Naive thymus-derived CD4-positive, alpha-beta T cell (primary cell): ENCODE measurements at regions of chr6 and their contacts with region 1.

Region 1: DNA sequence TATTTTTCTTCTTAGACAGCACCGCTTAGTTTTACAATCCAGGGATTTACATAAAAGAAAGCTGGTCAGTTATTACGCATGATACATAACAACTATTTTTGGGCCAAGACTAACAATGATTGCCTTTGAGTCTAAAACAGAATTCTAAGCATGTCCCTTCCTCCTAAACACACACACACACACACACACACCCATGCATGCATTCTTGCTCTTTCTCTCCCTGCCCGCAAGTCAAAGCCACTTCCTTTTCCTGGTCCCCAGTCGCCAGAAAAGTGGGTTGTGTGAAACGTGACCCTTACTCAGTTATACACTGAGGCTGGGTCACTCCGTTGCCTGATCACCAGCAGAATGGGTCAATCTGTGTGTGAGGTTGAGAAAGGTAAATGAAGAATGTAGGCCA is 31.4 kb downstream of the FYN start:
- DNase-seq: peak in 7 of 9 donors; percentile 38 to 63 (median 61)
- ATAC-seq: no peak
- H3K4me3 ChIP-seq: no peak overlapping the region
- H3K4me3 Mint-ChIP-seq: no peak overlapping the region
- H3K27ac ChIP-seq: peak overlapping the region; percentile 62
- H3K27ac Mint-ChIP-seq: no peak overlapping the region
- H3K4me1 ChIP-seq: peaks cover 98 to 100% of the 10 kb centered on the region in 2 donors
- H3K4me1 Mint-ChIP-seq: peaks cover 0 to 55% (median 0%) of the 10 kb centered on the region in 7 donors
- H3K27me3 ChIP-seq: no peaks in the 10 kb centered on the region
- H3K27me3 Mint-ChIP-seq: no peaks in the 10 kb centered on the region

Region 2: DNA sequence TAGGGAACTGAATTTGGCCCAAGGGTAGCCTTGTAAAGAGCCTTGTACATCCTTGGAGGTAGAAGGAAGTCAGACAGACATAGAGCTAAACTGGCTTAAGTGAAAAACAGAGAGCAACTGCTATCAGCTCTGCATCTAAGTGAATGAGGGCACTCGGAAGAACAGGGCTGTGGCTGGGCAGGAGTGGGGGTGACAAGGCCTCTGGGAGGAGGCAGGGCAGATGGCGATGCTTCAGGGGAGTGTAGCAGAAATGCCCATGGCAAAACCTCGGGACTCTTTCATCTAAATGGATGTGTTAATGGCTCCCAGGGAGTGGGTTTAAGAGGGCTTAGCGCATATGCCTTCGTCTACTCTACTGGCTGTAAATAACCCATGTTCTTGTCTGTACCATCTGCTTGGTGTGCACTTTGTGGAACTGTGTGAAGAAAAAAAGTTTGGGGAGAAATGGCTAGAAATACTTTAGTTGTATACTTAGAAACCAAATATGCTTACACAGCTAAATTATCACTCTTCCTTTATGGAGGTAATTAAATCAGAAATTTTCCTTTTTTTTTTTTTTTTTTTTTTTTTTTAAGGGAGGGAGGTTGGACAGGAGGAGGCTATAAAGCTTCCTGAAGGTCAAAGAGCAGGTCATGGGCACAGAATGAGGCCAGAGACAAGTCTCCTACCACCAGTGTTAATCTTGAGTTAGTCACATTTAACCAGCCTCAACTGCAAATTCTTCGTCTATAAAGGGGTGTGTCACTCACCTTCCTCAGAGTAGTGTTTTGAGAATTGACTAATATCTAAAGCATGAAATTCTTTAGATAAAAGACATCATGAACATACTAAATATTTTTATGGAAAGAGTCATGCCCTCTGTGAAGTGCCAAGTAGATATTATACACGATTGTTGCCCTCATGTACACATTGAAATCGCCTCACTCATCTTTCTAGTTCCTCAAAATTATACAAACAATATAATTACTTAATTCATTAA is 29.5 kb before region 1 on chr6:
- CTCF ChIA-PET with region 1: no interaction called
- POLR2A ChIA-PET with region 1: interaction called, 3 read pairs
- intact Hi-C with region 1: loop called in 1 of 2 experiments (anchors 1 kb)
- DNase-seq: peak in 2 of 9 donors; percentile 21 to 23
- ATAC-seq: peak; percentile 38
- H3K4me3 ChIP-seq: no peak overlapping the region
- H3K4me3 Mint-ChIP-seq: peak overlapping the region; percentile 8 to 81 (median 70)
- H3K27ac ChIP-seq: peak overlapping the region; percentile 66
- H3K27ac Mint-ChIP-seq: peak overlapping the region; percentile 83 to 97 (median 88)
- H3K4me1 ChIP-seq: peaks cover 72% of the 10 kb centered on the region in 2 donors
- H3K4me1 Mint-ChIP-seq: peaks cover 47 to 91% (median 86%) of the 10 kb centered on the region in 7 donors
- H3K27me3 ChIP-seq: no peaks in the 10 kb centered on the region
- H3K27me3 Mint-ChIP-seq: no peaks in the 10 kb centered on the region

Region 3: DNA sequence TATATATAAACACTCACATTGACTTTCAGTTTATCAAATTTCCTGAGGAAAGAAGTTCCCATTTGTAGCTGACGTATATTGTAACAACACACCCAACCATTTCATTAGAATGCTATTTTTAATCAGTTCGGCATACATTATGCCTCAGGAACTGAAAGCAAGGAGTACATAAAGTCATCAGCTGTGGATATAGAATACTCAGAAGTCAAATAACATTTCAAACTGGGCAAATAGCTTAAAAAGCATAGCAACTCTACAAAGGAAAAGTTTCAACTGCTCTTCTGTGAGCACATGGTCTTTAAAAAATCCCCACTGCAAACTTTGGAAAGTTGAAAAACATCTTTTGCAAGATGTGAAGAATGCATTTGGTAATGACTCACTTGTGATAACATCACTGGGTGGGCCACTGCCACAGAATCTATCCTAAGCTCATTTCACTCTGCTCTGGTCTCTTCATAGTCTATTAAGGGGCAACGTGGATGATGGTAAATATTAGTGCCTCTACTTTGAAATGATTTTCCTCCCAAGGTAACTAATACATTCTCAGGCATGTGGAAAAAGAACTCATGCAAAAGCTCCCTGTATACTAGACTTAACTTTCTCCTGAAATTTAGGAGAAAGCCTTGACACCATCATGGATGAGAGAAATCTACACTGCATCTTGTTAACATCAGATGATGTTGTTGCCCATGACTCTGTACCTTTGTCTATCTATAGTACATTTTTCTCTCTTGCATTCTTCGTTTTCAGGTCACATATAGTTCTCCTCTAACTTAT is 17.8 kb before region 1 on chr6:
- CTCF ChIA-PET with region 1: interaction called, 4 read pairs
- POLR2A ChIA-PET with region 1: interaction called, 6 read pairs
- intact Hi-C with region 1: loop called (anchors 2 kb)
- DNase-seq: peak in 1 of 9 donors; percentile 61
- ATAC-seq: peak; percentile 75
- H3K4me3 ChIP-seq: no peak overlapping the region
- H3K4me3 Mint-ChIP-seq: peak overlapping the region in 9 of 10 donors; percentile 2 to 64 (median 43)
- H3K27ac ChIP-seq: peak overlapping the region; percentile 56
- H3K27ac Mint-ChIP-seq: peak overlapping the region; percentile 5 to 92 (median 78)
- H3K4me1 ChIP-seq: peaks cover 39 to 56% of the 10 kb centered on the region in 2 donors
- H3K4me1 Mint-ChIP-seq: peaks cover 51 to 91% (median 86%) of the 10 kb centered on the region in 7 donors
- H3K27me3 ChIP-seq: no peaks in the 10 kb centered on the region
- H3K27me3 Mint-ChIP-seq: no peaks in the 10 kb centered on the region

Region 4: DNA sequence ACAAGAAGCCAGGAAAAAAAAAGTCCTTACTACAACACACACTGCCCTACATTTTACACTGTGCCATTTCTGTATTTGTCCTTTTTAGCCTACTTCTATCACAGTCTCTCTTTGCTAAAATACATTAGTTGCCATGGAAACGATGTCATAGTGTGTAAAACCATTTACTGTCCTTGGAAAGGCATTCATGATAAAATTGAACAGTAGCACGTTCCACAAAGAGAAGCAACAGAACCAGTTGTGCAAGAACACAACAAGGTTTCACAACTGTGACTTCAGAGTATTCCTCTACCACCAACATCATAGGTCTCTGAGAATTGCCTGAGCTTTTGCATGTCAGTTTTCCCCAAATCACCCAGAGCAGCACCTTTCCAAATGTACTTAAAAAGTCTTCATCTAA is 10.9 kb after region 1 on chr6:
- CTCF ChIA-PET with region 1: no interaction called
- POLR2A ChIA-PET with region 1: interaction called, 6 read pairs
- intact Hi-C with region 1: loop called in 1 of 2 experiments (anchors 1 kb)
- DNase-seq: peak in 4 of 9 donors; percentile 30 to 45 (median 42)
- ATAC-seq: peak; percentile 29
- H3K4me3 ChIP-seq: no peak overlapping the region
- H3K4me3 Mint-ChIP-seq: peak overlapping the region in 7 of 10 donors; percentile 10 to 71 (median 51)
- H3K27ac ChIP-seq: peak overlapping the region; percentile 41
- H3K27ac Mint-ChIP-seq: peak overlapping the region in 7 of 9 donors; percentile 57 to 88 (median 82)
- H3K4me1 ChIP-seq: peaks cover 57 to 87% of the 10 kb centered on the region in 2 donors
- H3K4me1 Mint-ChIP-seq: peaks cover 0 to 89% (median 77%) of the 10 kb centered on the region in 7 donors
- H3K27me3 ChIP-seq: no peaks in the 10 kb centered on the region
- H3K27me3 Mint-ChIP-seq: no peaks in the 10 kb centered on the region